ENCODE measurements at regions of chr5 and their contacts with region 1.

Region 1: GRCh38 chr5:36651761-36652685 is 45.6 kb downstream of the SLC1A3 start:
- DNase-seq: no peak
- ATAC-seq: peak; percentile 64 to 84 (median 76)
- H3K4me3 ChIP-seq: peak overlapping the region; percentile 35
- H3K27ac ChIP-seq: peak overlapping the region; percentile 87
- H3K4me1 ChIP-seq: peaks cover 55% of the 10 kb centered on the region
- H3K27me3 ChIP-seq: no peaks in the 10 kb centered on the region
- CTCF ChIP-seq: no peak

Region 2: DNA sequence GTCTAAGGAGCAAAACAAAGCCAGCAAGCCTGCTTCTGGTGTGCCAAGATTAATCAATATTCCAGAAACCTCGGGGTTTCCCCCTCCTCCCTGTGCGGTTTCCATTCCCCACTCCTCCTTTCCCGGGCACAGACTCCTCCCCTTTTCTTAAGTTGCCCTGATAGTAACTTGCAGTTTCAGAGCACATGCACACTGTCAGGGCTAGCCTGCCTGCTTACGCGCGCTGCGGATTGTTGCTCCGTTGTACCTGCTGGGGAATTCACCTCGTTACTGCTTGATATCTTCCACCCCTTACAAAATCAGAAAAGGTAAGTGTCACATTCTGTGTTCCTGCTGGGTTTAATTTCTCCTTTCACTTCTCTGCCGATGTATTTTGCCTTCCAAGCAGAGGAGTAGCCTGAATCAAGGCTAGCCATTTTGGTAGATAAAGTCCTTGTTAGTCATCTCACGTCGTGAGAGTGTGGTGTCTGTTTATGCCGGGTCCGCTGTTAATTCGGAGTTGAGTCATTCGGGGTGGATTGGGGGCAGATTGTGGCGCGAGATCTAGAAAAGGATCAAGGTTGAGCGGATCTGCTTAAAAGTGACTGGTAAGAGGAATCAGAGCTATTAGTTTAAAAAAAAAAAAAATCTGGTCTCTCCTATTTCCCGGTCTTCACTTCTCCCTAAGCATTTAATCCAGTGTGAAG is 45.5 kb before region 1 on chr5 and contains the start of gene SLC1A3:
- intact Hi-C with region 1: loop called in 1 of 2 experiments (anchors 2 kb)
- DNase-seq: peak; percentile 34 to 69
- ATAC-seq: peak; percentile 88 to 92 (median 90)
- H3K4me3 ChIP-seq: peak within 1 kb of the TSS; percentile 81
- H3K27ac ChIP-seq: peak within 1 kb of the TSS; percentile 88
- H3K4me1 ChIP-seq: peaks cover 13% of the 10 kb centered on the region
- H3K27me3 ChIP-seq: no peaks in the 10 kb centered on the region
- CTCF ChIP-seq: no peak
- total RNA-seq, gene SLC1A3: 12.7 to 25.3 (median 21.5) TPM

Region 3: DNA sequence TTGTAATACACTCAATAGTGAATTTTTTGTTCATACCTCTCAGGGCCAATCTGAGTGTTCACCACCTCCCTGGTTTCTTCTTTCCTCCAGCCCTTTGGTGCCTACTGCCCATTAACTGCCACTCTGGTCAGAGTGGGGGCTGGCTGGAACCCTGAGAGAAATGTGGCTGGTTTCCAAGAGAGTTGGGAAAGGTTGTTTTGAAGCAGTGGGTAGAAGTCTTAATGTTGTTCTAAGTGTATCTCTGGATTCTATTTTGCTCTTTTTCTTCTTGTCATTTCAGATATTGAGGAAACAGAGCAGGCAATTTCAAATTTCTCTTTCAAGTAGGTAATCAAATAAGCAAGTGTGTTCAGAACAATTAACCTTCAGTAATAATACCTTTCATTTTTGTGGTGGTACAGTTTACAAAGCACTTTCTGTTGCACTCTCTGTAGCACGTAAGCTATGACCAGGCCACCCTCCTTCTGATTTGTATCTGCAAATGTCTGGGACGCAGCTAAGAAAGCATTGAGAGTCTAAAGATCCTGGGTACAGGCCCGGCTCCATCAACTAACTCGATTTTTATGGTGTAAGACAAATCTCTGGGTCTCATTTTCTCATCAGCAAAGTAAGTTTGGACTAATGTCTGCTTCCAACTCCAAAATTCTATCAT is 37.2 kb before region 1 on chr5:
- intact Hi-C with region 1: loop called (anchors 2 to 5 kb)
- DNase-seq: no peak
- ATAC-seq: peak in 1 of 4 donors; percentile 30
- H3K4me3 ChIP-seq: no peak overlapping the region
- H3K27ac ChIP-seq: peak overlapping the region; percentile 59
- H3K4me1 ChIP-seq: peaks cover 10% of the 10 kb centered on the region
- H3K27me3 ChIP-seq: no peaks in the 10 kb centered on the region
- CTCF ChIP-seq: no peak

Measured in psoas muscle (tissue), 8 donors.